CD14-positive monocyte (primary cell): ENCODE measurements at regions of chr5 and their contacts with region 1.

Region 1: DNA sequence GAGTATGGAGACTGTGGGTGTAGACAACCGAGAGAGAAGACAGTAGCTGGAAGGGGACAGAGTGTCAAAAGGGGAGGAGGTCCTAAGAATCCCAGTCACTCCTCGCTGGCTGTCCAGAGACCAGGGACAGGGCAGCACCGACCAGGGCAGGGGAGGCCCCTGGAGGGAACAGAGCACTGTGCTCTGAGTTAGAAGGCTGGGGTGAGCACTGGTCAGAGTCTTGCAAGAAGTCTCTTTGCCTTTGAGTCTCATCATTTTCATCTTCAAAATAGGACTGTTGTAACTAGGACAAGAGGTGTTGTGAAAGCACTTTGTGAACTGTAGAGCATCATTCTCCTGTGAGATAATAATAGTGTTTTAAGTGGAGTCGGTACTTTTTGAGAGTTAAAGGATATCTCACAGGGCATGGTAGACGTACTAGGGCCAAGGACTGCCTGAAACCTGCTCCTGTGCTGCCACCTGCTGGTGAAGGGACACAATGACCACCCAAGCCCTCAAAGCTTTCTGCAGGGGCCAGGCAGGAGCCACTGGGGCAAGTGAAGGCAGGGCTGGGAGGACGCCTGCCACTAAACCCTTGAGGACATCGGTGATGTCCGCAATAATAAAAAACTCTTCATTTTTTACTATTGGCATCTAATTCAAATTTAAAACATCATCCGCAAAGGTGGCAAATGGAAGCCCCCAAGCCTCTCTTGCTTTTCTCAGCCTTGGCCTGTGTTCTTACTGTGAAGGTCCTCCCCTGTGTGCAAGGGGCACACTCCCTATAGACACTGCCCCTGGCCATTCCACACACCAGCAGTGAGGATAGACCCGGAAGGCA is 28.2 kb downstream of the SLC6A7 start:
- DNase-seq: peak; percentile 74 to 82 (median 79)
- H3K4me3 ChIP-seq: no peak overlapping the region
- H3K4me3 Mint-ChIP-seq: peak overlapping the region in 1 of 2 donors; percentile 44
- H3K27ac ChIP-seq: no peak overlapping the region
- H3K27ac Mint-ChIP-seq: peak overlapping the region in 1 of 7 donors; percentile 16
- H3K4me1 ChIP-seq: no peaks in the 10 kb centered on the region
- H3K4me1 Mint-ChIP-seq: peaks cover 7% of the 10 kb centered on the region
- H3K27me3 ChIP-seq: no peaks in the 10 kb centered on the region
- H3K27me3 Mint-ChIP-seq: peaks cover 8 to 17% (median 15%) of the 10 kb centered on the region in 3 donors
- CTCF ChIP-seq: peak; percentile 93

Region 2: GRCh38 chr5:150161242-150162141 is 56.6 kb before region 1 on chr5:
- intact Hi-C with region 1: loop called (anchors 1 to 2 kb)
- DNase-seq: peak; percentile 41 to 65 (median 60)
- H3K4me3 ChIP-seq: no peak overlapping the region
- H3K4me3 Mint-ChIP-seq: peak overlapping the region in 1 of 2 donors; percentile 21
- H3K27ac ChIP-seq: no peak overlapping the region
- H3K27ac Mint-ChIP-seq: peak overlapping the region in 1 of 7 donors; percentile 10
- H3K4me1 ChIP-seq: no peaks in the 10 kb centered on the region
- H3K4me1 Mint-ChIP-seq: peaks cover 6% of the 10 kb centered on the region
- H3K27me3 ChIP-seq: peaks cover 11 to 15% of the 10 kb centered on the region in 2 donors
- H3K27me3 Mint-ChIP-seq: peaks cover 27 to 32% (median 32%) of the 10 kb centered on the region in 3 donors
- CTCF ChIP-seq: peak; percentile 96

Region 3: DNA sequence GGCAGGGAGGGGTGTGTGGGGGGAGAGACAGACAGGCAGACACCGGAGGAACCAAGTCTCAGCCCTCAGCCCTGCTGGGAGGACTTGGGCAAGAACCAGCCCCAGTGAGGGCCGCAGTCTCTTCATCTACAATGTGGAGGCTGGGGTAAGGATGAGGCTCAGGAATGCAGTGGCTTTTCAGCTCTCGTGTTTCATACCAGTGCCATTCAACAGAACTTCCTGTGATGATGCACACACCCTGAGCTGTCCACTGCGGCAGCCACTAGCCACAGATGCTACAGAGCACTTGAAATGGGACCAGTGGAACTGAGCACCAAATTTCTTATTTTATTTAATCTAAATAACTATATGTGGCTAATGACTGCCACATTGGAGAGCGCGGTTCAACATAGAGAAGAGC is 60.8 kb after region 1 on chr5:
- intact Hi-C with region 1: no loop called
- DNase-seq: no peak
- H3K4me3 ChIP-seq: no peak overlapping the region
- H3K4me3 Mint-ChIP-seq: no peak overlapping the region
- H3K27ac ChIP-seq: no peak overlapping the region
- H3K27ac Mint-ChIP-seq: no peak overlapping the region
- H3K4me1 ChIP-seq: no peaks in the 10 kb centered on the region
- H3K4me1 Mint-ChIP-seq: peaks cover 2% of the 10 kb centered on the region
- H3K27me3 ChIP-seq: no peaks in the 10 kb centered on the region
- H3K27me3 Mint-ChIP-seq: peaks cover 4 to 7% (median 5%) of the 10 kb centered on the region in 3 donors
- CTCF ChIP-seq: no peak